ENCODE measurements at regions of chr18 and their contacts with region 1.

Region 1: GRCh38 chr18:31101183-31102024 is 817 bp downstream of the DSC2 start:
- DNase-seq: peak; percentile 81
- ATAC-seq: peak; percentile 82 to 94

Region 2: GRCh38 chr18:31225668-31226067 is 124.3 kb after region 1 on chr18:
- intact Hi-C with region 1: loop called in 1 of 2 experiments (anchors 5 kb)
- DNase-seq: peak; percentile 55
- ATAC-seq: peak; percentile 92

Region 3: GRCh38 chr18:31255953-31256352 is 154.5 kb after region 1 on chr18:
- intact Hi-C with region 1: loop called in 1 of 2 experiments (anchors 10 kb)
- DNase-seq: no peak
- ATAC-seq: no peak

Region 4: DNA sequence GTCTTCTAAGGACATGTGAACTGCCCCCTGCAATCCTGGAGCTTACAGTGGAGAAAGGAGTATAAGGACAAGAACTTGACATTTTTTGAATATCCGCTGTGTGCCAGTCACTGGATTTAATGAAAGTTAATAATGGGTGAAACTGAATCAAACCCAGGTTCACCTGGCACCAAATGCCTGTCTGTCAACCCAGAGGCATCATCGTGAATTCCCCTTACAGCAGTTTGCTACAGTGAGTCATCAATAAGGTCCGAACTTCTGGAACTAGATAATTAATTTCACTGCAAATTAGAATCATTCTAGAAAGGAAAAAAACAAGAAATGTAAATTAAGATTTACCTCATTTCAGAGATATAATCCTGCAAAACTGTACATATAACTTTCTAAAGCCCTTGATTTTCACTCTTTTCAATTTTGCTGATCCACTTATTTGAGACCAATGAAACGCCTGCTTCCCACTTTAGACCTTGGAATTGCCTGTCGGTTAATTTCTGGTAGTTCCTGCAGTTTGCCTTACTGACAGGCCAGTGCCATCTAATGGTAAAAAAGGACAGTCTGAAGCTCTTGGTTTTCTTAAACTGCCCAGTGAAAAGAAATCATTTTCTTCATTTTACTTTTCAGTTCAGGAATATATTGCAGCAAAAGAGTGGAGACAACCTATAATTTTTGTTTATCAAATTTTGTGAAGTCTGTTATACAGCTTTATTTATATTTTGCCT is 404.8 kb after region 1 on chr18:
- intact Hi-C with region 1: loop called in 1 of 2 experiments (anchors 5 kb)
- DNase-seq: no peak
- ATAC-seq: peak; percentile 32 to 61